Mammary epithelial cell (primary cell): ENCODE measurements at regions of chr12 and their contacts with region 1.

Region 1: GRCh38 chr12:86838711-86839110 is 582.5 kb upstream of the MGAT4C start:
- DNase-seq: no peak
- H3K4me3 ChIP-seq: no peak overlapping the region
- H3K27ac ChIP-seq: no peak overlapping the region
- H3K4me1 ChIP-seq: no peaks in the 10 kb centered on the region
- H3K27me3 ChIP-seq: no peaks in the 10 kb centered on the region
- CTCF ChIP-seq: no peak

Region 2: DNA sequence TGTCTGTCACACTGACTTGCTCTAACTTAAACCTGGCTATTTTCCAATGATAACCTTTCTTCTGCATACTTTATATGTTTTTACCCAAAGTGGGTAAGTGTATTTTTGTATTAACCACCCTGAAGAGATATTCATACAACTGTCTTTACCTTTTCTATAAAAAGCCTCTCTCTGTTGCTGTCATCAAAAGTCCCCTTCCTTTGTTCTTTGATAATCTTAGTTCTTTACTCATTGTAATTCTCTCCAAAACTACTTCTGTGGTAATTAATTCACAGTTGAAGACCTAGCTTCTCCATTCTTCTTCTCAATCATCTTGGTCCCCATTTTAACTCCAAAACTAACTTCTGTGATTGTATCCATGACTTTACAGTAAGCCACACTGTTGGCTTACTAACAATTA is 102.9 kb before region 1 on chr12:
- CTCF ChIA-PET with region 1: interaction called, 13 read pairs
- dilution Hi-C with region 1: no loop called
- in situ Hi-C with region 1: no loop called
- intact Hi-C with region 1: no loop called
- DNase-seq: no peak
- H3K4me3 ChIP-seq: no peak overlapping the region
- H3K27ac ChIP-seq: no peak overlapping the region
- H3K4me1 ChIP-seq: no peaks in the 10 kb centered on the region
- H3K27me3 ChIP-seq: no peaks in the 10 kb centered on the region
- CTCF ChIP-seq: no peak

Region 3: DNA sequence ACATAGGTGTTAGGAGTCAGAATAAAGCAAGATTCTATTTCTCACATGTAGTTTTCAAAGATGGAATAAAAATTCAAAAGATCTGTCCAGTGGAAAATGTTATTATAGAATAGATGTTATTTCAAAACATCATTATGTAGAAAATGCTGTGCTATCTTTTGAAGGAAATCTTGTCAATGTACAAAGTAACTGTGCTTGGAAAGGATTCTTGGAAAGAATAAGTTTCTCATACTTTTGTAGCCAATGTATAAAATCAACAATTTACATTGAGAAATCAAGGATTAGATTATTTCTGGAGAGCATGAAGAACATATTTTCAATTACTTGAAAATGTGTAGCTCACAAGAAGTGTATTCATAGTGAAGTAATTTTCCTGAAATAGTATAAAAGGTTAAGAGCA is 50.0 kb before region 1 on chr12:
- CTCF ChIA-PET with region 1: no interaction called
- dilution Hi-C with region 1: no loop called
- in situ Hi-C with region 1: no loop called
- intact Hi-C with region 1: no loop called
- DNase-seq: no peak
- H3K4me3 ChIP-seq: no peak overlapping the region
- H3K27ac ChIP-seq: no peak overlapping the region
- H3K4me1 ChIP-seq: peaks cover 4% of the 10 kb centered on the region
- H3K27me3 ChIP-seq: no peaks in the 10 kb centered on the region
- CTCF ChIP-seq: no peak

Region 4: GRCh38 chr12:86903159-86903558 is 64.4 kb after region 1 on chr12:
- CTCF ChIA-PET with region 1: no interaction called
- dilution Hi-C with region 1: no loop called
- in situ Hi-C with region 1: no loop called
- intact Hi-C with region 1: no loop called
- DNase-seq: no peak
- H3K4me3 ChIP-seq: no peak overlapping the region
- H3K27ac ChIP-seq: no peak overlapping the region
- H3K4me1 ChIP-seq: no peaks in the 10 kb centered on the region
- H3K27me3 ChIP-seq: no peaks in the 10 kb centered on the region
- CTCF ChIP-seq: no peak